ENCODE measurements at regions of chr14 and their contacts with region 1.

Region 1: GRCh38 chr14:36655963-36656686 is 5.5 kb upstream of the PAX9 start:
- DNase-seq: peak; percentile 93
- H3K4me3 ChIP-seq: peak overlapping the region; percentile 45
- H3K27ac ChIP-seq: peak overlapping the region; percentile 3
- H3K4me1 ChIP-seq: peaks cover 23% of the 10 kb centered on the region
- H3K27me3 ChIP-seq: no peaks in the 10 kb centered on the region
- CTCF ChIP-seq: peak; percentile 91

Region 2: DNA sequence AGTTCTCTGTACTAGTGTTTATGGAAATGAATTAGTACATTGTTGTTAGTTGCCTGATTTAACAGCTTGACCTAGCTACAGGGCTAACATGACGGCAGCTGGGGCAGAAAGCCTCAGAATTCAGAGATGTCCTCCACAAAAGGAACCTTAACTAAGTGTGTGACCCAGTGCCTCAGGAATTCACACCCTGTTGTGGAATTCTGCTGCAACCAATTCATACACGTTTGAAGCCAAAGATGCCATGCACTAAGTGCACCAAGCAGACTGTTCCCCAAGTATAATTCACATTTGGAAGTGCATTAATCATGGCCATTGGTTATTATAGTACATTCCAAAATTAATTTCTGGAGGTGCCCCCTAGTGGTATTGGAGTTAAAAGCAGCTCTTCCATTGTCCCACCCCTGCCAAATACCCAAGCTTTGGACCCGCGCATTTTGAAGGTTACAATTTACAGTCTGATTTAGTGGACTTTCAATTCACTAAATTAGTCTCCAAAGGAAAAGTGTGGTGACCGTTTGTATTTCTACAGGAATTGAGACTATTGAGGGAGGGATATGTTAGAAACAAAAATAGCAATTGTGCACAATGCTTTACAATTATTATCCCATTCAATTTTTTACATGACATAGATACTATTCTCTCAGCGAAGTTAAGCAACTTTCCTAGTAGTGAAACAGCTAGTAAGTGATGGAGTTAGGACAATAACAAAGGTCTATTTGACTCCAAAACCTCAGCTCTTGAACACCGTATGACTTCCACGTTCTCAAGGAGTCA is 91.5 kb after region 1 on chr14:
- CTCF ChIA-PET with region 1: interaction called, 5 read pairs
- POLR2A ChIA-PET with region 1: no interaction called
- intact Hi-C with region 1: loop called (anchors 5 kb)
- DNase-seq: peak; percentile 67
- H3K4me3 ChIP-seq: no peak overlapping the region
- H3K27ac ChIP-seq: no peak overlapping the region
- H3K4me1 ChIP-seq: peaks cover 4% of the 10 kb centered on the region
- H3K27me3 ChIP-seq: no peaks in the 10 kb centered on the region
- CTCF ChIP-seq: peak; percentile 88

Region 3: DNA sequence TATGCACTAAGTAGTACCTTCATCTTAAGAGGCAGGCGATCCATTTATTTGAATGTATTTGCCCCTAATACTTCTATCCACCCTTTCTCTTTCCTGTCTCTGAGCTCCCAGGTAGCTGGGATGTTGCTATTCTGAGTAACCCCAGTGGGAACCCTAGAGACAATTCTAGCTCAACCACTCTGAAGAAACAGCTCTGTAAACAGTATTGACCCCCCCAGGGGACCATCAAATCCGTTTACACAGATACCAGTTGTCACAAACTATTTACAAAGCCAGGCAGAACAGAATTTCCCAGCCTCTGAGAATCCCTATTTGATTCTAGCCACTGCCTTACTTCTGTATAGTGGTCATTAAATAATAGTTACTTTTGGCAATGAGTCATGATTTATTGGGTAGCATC is 606.5 kb after region 1 on chr14:
- CTCF ChIA-PET with region 1: no interaction called
- POLR2A ChIA-PET with region 1: no interaction called
- intact Hi-C with region 1: no loop called
- DNase-seq: no peak
- H3K4me3 ChIP-seq: no peak overlapping the region
- H3K27ac ChIP-seq: no peak overlapping the region
- H3K4me1 ChIP-seq: peaks cover 17% of the 10 kb centered on the region
- H3K27me3 ChIP-seq: peaks cover 19% of the 10 kb centered on the region
- CTCF ChIP-seq: no peak

Measured in A673 (cell line).